HepG2 (cell line): ENCODE measurements at regions of chr10 and their contacts with region 1.

Region 1: DNA sequence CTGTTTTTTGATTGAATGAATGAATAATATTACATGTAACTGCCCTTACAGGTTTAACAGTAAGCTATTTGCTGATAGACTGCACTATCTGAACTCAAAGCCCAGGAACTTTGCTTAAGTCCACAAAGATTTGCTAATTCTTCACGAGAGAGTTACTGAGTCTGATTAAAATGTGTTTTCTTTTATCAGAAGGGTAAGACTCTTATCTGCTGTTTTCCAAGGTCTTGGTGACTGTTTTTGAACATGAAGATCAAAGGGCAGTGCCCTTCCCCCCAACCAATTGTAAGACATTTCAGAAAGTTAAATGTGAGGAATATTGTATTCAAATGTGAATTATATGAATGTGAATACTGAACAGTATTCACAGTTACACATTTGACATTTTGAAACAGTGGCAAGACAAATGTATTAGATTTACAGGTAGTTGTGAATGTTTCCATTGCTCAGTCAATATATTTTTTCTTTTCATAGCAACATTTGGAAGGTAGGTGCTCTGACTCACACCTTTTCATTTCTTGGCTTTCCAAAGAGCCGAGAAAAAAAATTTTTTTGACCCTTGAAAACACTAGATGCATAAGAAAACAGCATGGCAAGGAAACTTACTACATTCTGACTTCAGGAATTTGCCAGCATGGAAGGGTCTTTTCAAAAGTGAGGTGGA is 62.7 kb downstream of the DKK1 start:
- DNase-seq: peak; percentile 67
- ATAC-seq: peak; percentile 60
- H3K4me3 ChIP-seq: peak overlapping the region in 2 of 3 experiments; percentile 6 to 11; a peak in 1 of 6 replicates
- H3K27ac ChIP-seq: peak overlapping the region; percentile 60
- H3K4me1 ChIP-seq: peaks cover 55% of the 10 kb centered on the region
- H3K27me3 ChIP-seq: no peaks in the 10 kb centered on the region
- CTCF ChIP-seq: no peak
- EP300 ChIP-seq: peak in 1 of 2 experiments; percentile 81; a peak in 2 of 4 replicates
- POLR2A ChIP-seq: no peak
- RAD21 ChIP-seq: no peak

Region 2: GRCh38 chr10:52334595-52334994 is 42.2 kb before region 1 on chr10:
- CTCF ChIA-PET with region 1: no interaction called
- POLR2A ChIA-PET with region 1: no interaction called
- in situ Hi-C with region 1: no loop called
- intact Hi-C with region 1: no loop called
- DNase-seq: peak; percentile 57
- ATAC-seq: no peak
- H3K4me3 ChIP-seq: no peak overlapping the region
- H3K27ac ChIP-seq: no peak overlapping the region
- H3K4me1 ChIP-seq: peaks cover 41% of the 10 kb centered on the region
- H3K27me3 ChIP-seq: no peaks in the 10 kb centered on the region
- CTCF ChIP-seq: no peak
- EP300 ChIP-seq: 0 out of 4 replicates have a peak, but pooled peaks of 1 of the 2 experiments have one; percentile 15
- POLR2A ChIP-seq: no peak
- RAD21 ChIP-seq: no peak

Region 3: DNA sequence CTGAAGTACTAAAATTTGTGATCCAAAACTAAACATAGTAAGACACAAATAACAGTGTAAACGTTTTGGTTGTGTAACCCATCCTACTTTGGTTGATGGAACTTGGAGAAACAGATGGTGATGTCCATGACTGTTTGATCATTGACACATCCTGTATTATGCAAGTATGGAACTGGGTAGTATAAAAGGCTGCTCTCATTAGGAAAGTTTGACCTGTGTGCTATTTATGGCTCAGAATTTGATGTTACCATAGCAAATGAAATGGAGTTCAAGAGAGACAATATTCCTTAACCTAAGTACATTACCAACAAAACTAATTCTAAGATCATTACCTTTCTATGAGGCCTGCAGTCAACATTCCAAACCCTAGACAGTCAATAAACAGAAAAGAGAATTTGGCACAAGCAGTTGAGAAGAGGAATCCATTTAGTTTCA is 22.8 kb before region 1 on chr10:
- CTCF ChIA-PET with region 1: no interaction called
- POLR2A ChIA-PET with region 1: no interaction called
- in situ Hi-C with region 1: no loop called
- intact Hi-C with region 1: no loop called
- DNase-seq: peak; percentile 88
- ATAC-seq: peak; percentile 95
- H3K4me3 ChIP-seq: no peak overlapping the region
- H3K27ac ChIP-seq: peak overlapping the region; percentile 52
- H3K4me1 ChIP-seq: peaks cover 43% of the 10 kb centered on the region
- H3K27me3 ChIP-seq: no peaks in the 10 kb centered on the region
- CTCF ChIP-seq: no peak
- EP300 ChIP-seq: peak; percentile 29 to 84; a peak in 2 of 4 replicates
- POLR2A ChIP-seq: no peak
- RAD21 ChIP-seq: no peak

Region 4: DNA sequence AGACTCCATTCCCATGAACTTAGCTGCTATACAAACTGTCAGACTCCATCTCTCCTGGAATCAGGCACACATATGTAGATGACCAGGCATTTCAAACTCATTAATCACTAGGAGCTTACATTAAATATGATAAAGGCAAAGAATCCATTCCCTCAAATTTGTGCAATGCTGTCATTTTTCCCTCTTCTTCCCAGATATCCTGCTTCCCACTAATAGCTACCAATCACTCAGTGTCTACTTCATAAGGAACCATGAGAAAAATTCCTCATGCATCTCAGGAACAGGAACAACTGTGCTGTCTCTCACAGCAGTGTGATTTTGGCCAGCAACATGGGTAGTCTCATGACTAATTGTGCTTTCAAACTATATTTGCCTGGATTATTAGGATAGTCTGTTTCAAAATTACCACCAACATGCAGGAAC is 71.1 kb after region 1 on chr10:
- CTCF ChIA-PET with region 1: no interaction called
- POLR2A ChIA-PET with region 1: no interaction called
- in situ Hi-C with region 1: no loop called
- intact Hi-C with region 1: loop called (anchors 5 kb)
- DNase-seq: no peak
- ATAC-seq: no peak
- H3K4me3 ChIP-seq: no peak overlapping the region
- H3K27ac ChIP-seq: no peak overlapping the region
- H3K4me1 ChIP-seq: peaks cover 18% of the 10 kb centered on the region
- H3K27me3 ChIP-seq: no peaks in the 10 kb centered on the region
- CTCF ChIP-seq: no peak
- EP300 ChIP-seq: no peak
- POLR2A ChIP-seq: no peak
- RAD21 ChIP-seq: no peak

Region 5: GRCh38 chr10:52488606-52489485 is 112.0 kb after region 1 on chr10:
- CTCF ChIA-PET with region 1: no interaction called
- POLR2A ChIA-PET with region 1: no interaction called
- in situ Hi-C with region 1: no loop called
- intact Hi-C with region 1: loop called (anchors 5 kb)
- DNase-seq: peak; percentile 46
- ATAC-seq: peak; percentile 54; the same call in 1 of the 3 replicates
- H3K4me3 ChIP-seq: no peak overlapping the region
- H3K27ac ChIP-seq: no peak overlapping the region
- H3K4me1 ChIP-seq: no peaks in the 10 kb centered on the region
- H3K27me3 ChIP-seq: no peaks in the 10 kb centered on the region; a peak in 1 of 5 replicates
- CTCF ChIP-seq: peak; percentile 59
- EP300 ChIP-seq: no peak
- POLR2A ChIP-seq: no peak
- RAD21 ChIP-seq: peak; percentile 29; the same call in 1 of the 2 replicates